ENCODE measurements at regions of chr15 and their contacts with region 1.

Region 1: DNA sequence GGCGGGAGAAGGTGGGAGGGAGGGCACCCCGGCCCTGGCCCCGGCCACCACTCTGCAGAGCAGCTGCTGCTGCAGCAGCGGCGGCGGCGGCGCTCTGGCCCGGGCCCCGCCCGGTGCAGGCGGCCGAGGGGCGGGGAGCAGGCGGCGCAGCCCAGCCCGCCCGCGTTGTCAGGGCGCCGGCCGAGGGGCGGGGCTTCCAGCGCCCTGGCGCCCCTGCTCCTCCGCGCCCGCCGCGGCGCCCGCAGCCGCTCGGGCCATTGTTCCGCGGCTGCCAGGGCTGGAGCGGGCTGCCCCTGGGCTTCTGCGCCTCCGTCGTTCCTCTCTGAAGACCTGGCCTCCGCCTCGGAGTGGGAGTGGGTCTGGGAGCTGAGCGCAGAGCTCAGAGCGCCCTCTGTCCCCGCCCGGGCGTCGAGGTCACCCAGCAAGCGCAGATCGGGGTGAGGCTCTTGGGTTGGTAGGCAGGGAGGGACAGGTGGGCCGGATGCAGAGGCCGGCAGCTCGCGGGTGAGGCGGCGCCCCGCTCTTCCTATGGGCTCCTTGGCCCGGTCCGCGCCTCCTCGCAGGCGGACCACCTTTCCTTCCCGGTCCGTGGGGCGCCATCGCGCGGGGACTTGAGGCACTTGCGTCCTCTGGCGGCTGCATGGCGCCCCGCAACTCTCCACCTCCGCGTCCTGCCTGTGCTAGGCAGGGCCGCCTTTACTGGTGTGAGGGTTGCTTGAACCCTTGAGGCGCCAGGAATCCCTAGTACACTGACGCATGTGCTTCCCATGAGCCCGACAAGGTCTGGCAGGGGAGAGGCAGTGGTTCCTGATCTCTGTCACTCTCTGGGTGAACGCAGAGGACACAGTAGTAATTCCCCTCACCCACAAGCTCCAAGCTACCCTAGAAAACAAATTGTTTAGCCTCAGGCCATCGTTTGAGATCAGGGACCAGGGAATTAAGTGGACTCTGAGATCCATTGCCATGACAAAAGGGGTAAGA is at the start of gene LPCAT4:
- DNase-seq: peak; percentile 85 to 94 (median 90)
- H3K4me3 ChIP-seq: peak within 1 kb of the TSS; percentile 79
- H3K4me3 Mint-ChIP-seq: peak within 1 kb of the TSS; percentile 90 to 98 (median 95)
- H3K27ac ChIP-seq: peak within 1 kb of the TSS; percentile 75
- H3K27ac Mint-ChIP-seq: peak within 1 kb of the TSS; percentile 93 to 98 (median 96)
- H3K4me1 ChIP-seq: peaks cover 25% of the 10 kb centered on the region
- H3K4me1 Mint-ChIP-seq: peaks cover 31 to 51% (median 42%) of the 10 kb centered on the region in 3 donors
- H3K27me3 ChIP-seq: no peaks in the 10 kb centered on the region
- H3K27me3 Mint-ChIP-seq: no peaks in the 10 kb centered on the region
- total RNA-seq, gene LPCAT4: 49.5 to 57.4 TPM

Region 2: DNA sequence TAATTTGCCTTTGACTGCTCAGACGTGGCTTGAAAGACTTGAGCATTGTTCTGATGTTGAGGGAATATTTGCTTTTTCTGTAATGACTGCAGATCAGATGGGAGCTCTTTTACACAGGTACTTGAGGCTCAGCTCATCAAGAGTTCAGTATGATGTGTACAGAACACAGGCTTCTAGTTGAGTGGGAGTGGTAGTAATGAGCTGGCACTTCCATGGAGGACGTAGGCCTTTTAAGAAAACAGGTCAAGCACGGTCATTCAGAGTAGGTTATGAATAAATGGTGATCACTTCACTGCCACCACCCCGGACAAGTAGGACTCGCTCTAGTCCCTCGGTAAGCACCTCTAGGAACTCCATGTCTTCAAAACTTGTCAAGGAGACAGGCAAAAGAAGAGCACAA is 133.8 kb before region 1 on chr15:
- CTCF ChIA-PET with region 1: interaction called, 19 read pairs
- POLR2A ChIA-PET with region 1: no interaction called
- DNase-seq: no peak
- H3K4me3 ChIP-seq: no peak overlapping the region
- H3K4me3 Mint-ChIP-seq: no peak overlapping the region
- H3K27ac ChIP-seq: no peak overlapping the region
- H3K27ac Mint-ChIP-seq: peak overlapping the region in 5 of 8 donors; percentile 13 to 82 (median 44)
- H3K4me1 ChIP-seq: no peaks in the 10 kb centered on the region
- H3K4me1 Mint-ChIP-seq: no peaks in the 10 kb centered on the region
- H3K27me3 ChIP-seq: no peaks in the 10 kb centered on the region
- H3K27me3 Mint-ChIP-seq: no peaks in the 10 kb centered on the region

Region 3: GRCh38 chr15:34275154-34275553 is 92.2 kb before region 1 on chr15:
- CTCF ChIA-PET with region 1: no interaction called
- POLR2A ChIA-PET with region 1: no interaction called
- DNase-seq: no peak
- H3K4me3 ChIP-seq: no peak overlapping the region
- H3K4me3 Mint-ChIP-seq: no peak overlapping the region
- H3K27ac ChIP-seq: no peak overlapping the region
- H3K27ac Mint-ChIP-seq: no peak overlapping the region
- H3K4me1 ChIP-seq: no peaks in the 10 kb centered on the region
- H3K4me1 Mint-ChIP-seq: peaks cover 2 to 19% (median 13%) of the 10 kb centered on the region in 3 donors
- H3K27me3 ChIP-seq: no peaks in the 10 kb centered on the region
- H3K27me3 Mint-ChIP-seq: no peaks in the 10 kb centered on the region

Region 4: DNA sequence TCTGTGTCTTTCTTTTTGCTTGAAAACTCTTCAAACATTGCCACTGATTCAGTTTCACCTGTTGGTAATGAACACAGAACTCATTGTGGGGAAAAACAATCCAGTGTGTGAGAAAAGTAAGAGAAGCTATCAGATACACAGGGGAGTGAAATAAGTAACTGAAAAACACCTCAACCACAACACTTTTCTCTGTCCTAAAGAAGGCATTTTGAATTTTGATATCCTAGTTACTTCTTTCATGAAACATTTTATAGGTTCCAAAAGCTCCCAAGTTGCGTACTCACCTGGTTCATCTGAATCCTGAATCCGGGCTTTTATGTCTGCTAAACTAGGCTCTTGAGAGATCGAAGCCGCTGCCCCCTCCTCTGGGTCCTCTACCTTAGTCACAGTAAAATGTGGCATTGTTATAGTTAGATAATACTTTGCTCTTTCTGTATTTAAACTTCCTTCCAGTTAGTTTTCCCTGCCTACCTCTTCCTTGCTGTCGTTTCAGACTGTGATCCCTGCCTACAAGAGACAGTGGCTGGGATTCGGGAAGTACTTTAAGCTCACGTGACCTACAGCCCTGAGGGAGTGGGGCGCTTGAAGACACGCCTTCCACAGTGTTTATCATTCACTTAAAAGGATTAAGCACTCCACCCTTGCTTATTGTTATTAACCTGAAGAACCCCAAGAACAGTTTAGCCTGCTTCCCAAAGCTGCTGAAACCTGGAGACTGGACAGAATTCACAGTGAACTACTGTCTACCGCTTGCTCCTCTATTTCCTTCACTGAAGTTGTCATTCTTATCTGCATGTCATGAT is 48.9 kb before region 1 on chr15:
- CTCF ChIA-PET with region 1: interaction called, 14 read pairs
- POLR2A ChIA-PET with region 1: interaction called, 3 read pairs
- DNase-seq: peak in 1 of 5 donors; percentile 39
- H3K4me3 ChIP-seq: peak overlapping the region; percentile 57
- H3K4me3 Mint-ChIP-seq: peak overlapping the region; percentile 77 to 97 (median 92)
- H3K27ac ChIP-seq: no peak overlapping the region
- H3K27ac Mint-ChIP-seq: peak overlapping the region in 7 of 8 donors; percentile 76 to 98 (median 90)
- H3K4me1 ChIP-seq: peaks cover 11% of the 10 kb centered on the region
- H3K4me1 Mint-ChIP-seq: peaks cover 34 to 60% (median 51%) of the 10 kb centered on the region in 3 donors
- H3K27me3 ChIP-seq: no peaks in the 10 kb centered on the region
- H3K27me3 Mint-ChIP-seq: no peaks in the 10 kb centered on the region

Region 5: DNA sequence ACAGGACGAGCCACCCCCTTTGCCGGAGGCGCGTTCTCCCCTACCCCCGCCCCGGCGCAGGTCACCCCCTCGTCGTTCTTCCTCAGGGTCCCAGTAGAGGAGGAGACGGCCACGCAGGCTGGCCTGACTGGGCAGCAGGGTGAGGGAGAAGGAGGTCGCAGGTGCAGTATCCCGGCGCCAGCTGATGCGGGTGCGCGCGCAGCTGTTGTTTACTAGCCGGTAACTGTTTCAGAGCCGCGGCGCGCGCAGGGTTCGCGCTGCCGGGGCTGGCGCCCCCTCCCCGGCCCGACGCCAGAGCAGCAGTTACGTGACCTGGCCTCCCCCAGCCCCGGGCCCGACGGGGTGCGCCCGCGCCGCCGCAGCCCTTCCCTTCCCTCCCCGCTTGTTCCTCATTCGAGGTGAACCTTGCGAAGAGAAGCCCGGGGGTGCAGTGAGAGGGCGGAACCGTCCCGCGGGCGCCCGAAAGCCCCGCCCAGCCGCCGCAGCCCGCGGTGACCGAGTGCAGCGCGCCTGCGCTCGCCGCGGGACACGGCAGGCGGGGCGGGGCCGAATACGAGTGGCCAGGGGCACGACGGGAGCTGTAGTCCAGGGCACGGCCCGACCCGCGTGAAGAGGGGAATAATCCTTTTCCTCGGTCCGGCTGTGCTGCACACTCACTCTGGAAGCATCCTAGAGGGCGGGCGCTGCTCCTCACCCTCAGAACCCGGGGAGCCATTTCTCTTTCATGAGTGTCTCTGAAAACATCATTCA is 29.7 kb before region 1 on chr15 and contains the start of gene SLC12A6:
- CTCF ChIA-PET with region 1: interaction called, 60 read pairs
- POLR2A ChIA-PET with region 1: interaction called, 42 read pairs
- DNase-seq: peak; percentile 86 to 94 (median 91)
- H3K4me3 ChIP-seq: peak within 1 kb of the TSS; percentile 89
- H3K4me3 Mint-ChIP-seq: peak within 1 kb of the TSS; percentile 91 to 100 (median 97)
- H3K27ac ChIP-seq: peak within 1 kb of the TSS; percentile 85
- H3K27ac Mint-ChIP-seq: peak within 1 kb of the TSS; percentile 85 to 99 (median 96)
- H3K4me1 ChIP-seq: peaks cover 58% of the 10 kb centered on the region
- H3K4me1 Mint-ChIP-seq: peaks cover 59 to 71% (median 69%) of the 10 kb centered on the region in 3 donors
- H3K27me3 ChIP-seq: no peaks in the 10 kb centered on the region
- H3K27me3 Mint-ChIP-seq: peaks cover 0 to 3% of the 10 kb centered on the region in 2 donors
- total RNA-seq, gene SLC12A6: 19.2 to 20.6 TPM